Activated naive CD8-positive, alpha-beta T cell treated with anti-CD3 and anti-CD28 coated beads, Interleukin-2, amount 10 ng/mL, durations not matched to agents 7 days and 5 days (primary cell): ENCODE measurements at regions of chr18 and their contacts with region 1.

Region 1: GRCh38 chr18:658001-658946 is 821 bp downstream of the TYMS start:
- DNase-seq: peak; percentile 84
- ATAC-seq: peak; percentile 68
- H3K4me3 Mint-ChIP-seq: peak overlapping the region; percentile 96
- H3K27ac Mint-ChIP-seq: peak overlapping the region; percentile 92
- H3K4me1 Mint-ChIP-seq: peaks cover 37% of the 10 kb centered on the region
- H3K27me3 Mint-ChIP-seq: no peaks in the 10 kb centered on the region

Region 2: DNA sequence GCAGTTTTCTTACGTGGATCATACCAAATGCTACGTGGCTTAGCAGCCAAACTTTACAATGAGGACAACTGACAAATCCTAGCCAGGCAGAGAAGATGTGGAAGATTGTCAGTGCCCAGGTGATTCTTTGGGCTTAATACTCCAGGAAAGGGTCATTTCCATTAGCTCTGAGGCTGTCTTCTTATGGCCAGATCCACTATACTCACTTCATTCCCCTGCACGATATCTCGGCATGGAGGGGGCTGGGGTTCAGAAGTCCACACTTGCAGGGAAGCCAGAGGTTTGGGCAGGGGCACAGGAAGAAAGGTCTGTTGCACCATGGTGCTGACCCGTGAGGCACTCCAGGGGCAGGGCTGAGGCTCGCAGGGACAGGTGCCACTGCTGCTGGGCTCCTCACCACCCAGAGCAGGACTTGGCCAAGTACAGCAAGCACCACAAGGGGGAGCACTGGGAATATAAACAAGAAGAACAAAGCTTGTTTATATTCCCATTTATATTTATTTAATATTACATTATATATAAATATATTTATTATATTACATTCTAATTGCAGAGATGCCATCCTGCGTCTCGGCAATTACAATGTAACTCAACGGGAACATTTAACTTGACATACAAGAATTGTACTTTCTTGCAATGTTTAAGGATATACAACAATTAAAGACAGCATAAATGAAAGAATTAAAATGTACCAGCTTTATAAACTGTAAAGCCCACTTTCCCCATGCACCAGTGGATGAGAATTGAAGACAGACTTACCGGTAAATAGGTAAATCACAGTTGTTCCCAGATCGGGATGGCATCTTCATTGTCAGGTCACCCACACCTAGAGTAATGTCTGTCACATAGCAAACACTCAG is 34.3 kb before region 1 on chr18:
- POLR2A ChIA-PET with region 1: interaction called, 11 read pairs
- DNase-seq: peak; percentile 57
- ATAC-seq: peak; percentile 82
- H3K4me3 Mint-ChIP-seq: no peak overlapping the region
- H3K27ac Mint-ChIP-seq: no peak overlapping the region
- H3K4me1 Mint-ChIP-seq: peaks cover 2% of the 10 kb centered on the region
- H3K27me3 Mint-ChIP-seq: peaks cover 26% of the 10 kb centered on the region

Region 3: GRCh38 chr18:670522-670921 is 12.2 kb after region 1 on chr18:
- POLR2A ChIA-PET with region 1: interaction called, 14 read pairs
- DNase-seq: no peak
- ATAC-seq: no peak
- H3K4me3 Mint-ChIP-seq: no peak overlapping the region
- H3K27ac Mint-ChIP-seq: peak overlapping the region; percentile 9
- H3K4me1 Mint-ChIP-seq: peaks cover 14% of the 10 kb centered on the region
- H3K27me3 Mint-ChIP-seq: no peaks in the 10 kb centered on the region

Region 4: DNA sequence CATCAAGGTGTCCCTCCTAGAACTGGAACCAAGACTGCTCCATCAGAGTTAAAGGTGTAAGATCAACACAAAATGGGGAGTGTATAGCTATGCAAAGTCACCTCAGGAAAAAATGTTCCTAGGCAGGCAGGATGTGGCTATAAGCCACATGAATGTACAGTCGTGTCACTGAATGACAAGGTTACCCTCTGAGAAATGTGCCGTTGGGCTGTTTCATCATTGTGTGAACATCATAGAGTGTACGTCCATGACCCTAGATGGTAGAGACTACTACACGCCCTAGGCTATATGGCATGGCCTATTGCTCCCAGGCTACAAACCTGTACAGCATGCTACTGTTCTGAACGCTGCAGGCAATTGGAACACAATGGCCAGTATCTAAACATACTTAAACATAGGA is 23.7 kb after region 1 on chr18:
- POLR2A ChIA-PET with region 1: interaction called, 39 read pairs
- DNase-seq: peak; percentile 44
- ATAC-seq: peak; percentile 99
- H3K4me3 Mint-ChIP-seq: peak overlapping the region; percentile 72
- H3K27ac Mint-ChIP-seq: peak overlapping the region; percentile 94
- H3K4me1 Mint-ChIP-seq: peaks cover 18% of the 10 kb centered on the region
- H3K27me3 Mint-ChIP-seq: no peaks in the 10 kb centered on the region

Region 5: DNA sequence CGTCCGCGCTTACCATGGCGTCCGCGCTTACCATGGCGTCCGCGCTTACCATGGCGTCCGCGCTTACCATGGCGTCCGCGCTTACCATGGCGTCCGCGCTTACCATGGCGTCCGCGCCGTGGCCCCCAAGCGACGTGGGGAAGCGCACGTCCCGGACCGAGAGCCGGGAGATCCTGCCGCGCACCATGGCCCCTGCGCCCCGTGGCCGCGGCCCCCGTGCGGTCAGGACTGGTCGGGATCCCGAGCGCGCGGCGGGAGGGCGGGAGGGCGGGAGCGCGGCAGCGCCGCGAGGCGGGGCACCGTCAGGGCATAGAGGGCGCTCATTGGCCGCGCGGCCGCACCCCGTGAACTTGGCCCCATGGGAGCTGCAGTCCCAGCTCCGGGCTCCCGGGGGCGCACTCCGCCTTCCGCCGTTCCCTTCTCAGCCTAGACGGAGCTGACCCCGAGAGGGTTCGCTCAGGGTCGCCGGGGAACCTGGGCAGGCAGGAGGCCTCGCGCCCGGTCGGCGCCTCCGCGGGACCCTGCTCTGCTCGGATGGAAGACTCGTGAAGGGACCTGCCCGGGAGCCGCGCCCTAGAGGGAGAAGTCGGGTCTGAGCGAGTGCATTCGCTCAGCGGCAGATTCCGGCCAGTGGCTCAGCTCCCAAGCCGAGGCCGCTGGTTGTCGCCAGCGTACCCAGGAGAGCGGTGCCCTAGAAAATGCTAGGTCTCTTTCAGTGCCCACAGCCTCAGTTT is 54.3 kb after region 1 on chr18 and contains the start of gene ENOSF1:
- POLR2A ChIA-PET with region 1: interaction called, 13 read pairs
- DNase-seq: peak; percentile 95
- ATAC-seq: peak; percentile 92
- H3K4me3 Mint-ChIP-seq: peak within 1 kb of the TSS; percentile 88
- H3K27ac Mint-ChIP-seq: peak within 1 kb of the TSS; percentile 85
- H3K4me1 Mint-ChIP-seq: peaks cover 30% of the 10 kb centered on the region
- H3K27me3 Mint-ChIP-seq: no peaks in the 10 kb centered on the region
- total RNA-seq, gene ENOSF1: 76.0 to 79.5 TPM

Region 6: DNA sequence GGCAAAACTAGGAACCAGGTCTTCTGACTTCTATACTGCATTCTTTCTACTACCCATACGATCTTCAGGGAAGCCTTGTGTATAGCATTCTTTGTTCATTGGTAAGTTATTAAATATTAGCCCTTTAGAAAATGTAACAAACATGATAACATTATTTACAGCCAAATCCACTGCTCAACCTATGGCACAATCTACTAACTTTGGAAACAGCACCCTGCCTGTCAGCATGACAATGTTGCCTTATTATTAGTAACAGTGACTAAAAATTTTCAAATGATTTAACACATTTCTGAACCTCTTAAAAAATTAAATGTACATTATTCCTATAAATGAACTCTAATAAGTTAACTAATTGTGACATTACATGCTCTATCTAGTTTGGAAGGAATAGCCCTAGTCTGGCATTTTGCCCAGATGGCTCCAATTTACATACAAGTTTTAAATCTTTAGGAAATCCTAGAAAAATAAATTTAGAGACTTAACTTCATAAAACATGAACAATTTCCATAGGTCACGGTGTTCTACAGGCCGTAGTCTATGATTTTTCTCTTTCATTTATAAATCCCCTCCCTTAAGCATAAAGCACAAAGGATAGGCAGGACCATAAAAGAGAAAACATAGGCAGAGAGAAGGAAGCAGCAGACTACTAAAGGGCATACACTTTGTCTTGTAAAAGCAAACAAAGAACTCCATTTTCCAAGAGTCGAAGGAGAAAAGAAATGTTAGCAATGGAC is 120.1 kb after region 1 on chr18:
- POLR2A ChIA-PET with region 1: no interaction called
- DNase-seq: no peak
- ATAC-seq: no peak
- H3K4me3 Mint-ChIP-seq: no peak overlapping the region
- H3K27ac Mint-ChIP-seq: no peak overlapping the region
- H3K4me1 Mint-ChIP-seq: peaks cover 15% of the 10 kb centered on the region
- H3K27me3 Mint-ChIP-seq: no peaks in the 10 kb centered on the region

Region 7: DNA sequence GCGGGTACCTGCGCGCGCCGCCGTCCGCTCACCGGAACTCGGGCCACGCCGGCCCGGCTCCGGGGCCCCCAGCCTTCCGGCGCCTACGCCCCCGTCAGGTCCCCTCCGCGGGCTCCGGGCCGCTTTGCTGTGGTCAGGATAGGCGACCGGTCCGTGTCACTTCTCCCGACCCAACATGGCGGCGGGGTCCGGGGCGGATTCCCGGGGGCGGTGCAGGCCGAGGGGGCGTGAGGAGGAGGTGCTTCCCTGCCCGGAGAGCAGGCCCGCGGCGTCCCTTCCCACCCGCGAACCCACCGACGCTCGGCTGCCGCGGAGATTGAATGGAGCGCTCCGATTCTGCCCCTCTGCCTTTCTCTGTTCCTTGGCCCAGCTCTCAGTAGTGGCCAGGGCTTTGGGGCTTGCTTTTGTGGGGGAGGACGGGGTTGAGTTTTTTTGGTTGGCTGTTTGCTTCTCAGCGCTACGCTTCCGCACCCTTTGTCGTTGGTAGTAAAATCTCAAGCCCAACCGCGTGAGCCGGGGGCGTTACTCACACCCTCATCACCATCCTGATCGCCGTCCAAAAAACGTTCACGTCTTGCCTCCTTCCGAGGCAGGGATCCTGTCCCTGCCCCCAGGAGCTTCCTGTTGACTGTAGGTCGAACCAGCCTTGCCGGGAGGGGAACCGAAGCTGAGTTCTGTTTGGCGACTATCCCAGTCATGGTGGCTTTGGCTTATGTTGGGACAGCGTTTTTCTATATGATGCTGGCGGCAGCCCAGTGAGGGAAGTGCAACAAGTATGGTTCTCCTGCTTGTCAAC is 154.3 kb after region 1 on chr18:
- POLR2A ChIA-PET with region 1: interaction called, 36 read pairs
- DNase-seq: peak; percentile 88
- ATAC-seq: peak; percentile 59
- H3K4me3 Mint-ChIP-seq: peak overlapping the region; percentile 93
- H3K27ac Mint-ChIP-seq: peak overlapping the region; percentile 100
- H3K4me1 Mint-ChIP-seq: peaks cover 60% of the 10 kb centered on the region
- H3K27me3 Mint-ChIP-seq: no peaks in the 10 kb centered on the region